ENCODE measurements at regions of chr13 and their contacts with region 1.

Region 1: DNA sequence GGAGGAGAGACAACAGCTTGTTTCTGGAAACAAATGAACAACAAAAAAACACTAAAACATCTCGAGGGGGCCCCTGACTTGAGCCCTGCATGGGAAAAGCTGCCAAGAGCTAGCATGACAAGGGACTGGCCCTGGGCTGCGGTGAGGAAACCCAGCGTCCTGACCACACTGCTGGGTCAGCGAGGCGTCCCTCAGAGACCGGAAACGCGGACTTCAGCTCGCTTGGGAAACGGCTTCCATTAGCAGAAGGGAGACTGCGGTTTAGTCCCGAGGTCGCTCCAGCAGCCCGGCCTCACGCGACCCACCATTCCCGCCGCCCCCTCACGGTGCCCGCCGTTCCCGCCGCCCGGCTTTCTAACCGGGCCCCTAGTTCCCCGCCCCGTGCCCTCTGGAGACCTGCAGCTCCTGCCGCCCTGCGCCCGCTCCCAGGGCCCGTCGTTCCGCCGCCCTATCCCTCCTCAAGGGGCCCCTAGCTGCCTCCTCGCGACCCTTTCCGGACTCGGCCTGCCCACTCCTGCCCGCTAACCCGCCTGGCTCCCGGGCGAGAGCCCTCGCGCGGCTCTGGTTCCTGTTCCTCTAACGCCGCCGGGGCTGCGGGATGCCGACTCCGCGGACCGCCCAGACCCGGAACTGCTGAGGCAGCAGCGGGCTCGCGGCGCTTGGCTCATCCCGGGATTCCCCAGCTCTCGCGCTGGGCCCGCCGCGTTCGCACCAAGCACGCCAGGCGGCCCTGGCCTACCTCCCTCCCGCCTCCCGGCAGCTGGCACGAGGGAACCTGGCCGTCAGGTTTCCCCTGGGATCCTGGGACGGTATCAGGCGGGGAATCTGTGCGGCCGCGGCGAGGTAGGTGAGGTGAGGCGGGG is at the start of gene CCDC122:
- DNase-seq: peak; percentile 79
- H3K4me3 ChIP-seq: peak within 1 kb of the TSS; percentile 71 to 92 (median 76)
- H3K27ac ChIP-seq: peak within 1 kb of the TSS; percentile 90
- H3K4me1 ChIP-seq: peaks cover 11% of the 10 kb centered on the region
- H3K27me3 ChIP-seq: no peaks in the 10 kb centered on the region
- CTCF ChIP-seq: no peak
- POLR2A ChIP-seq: peak; percentile 74
- total RNA-seq, gene CCDC122: 5.1 and 7.5 TPM in 2 replicates

Region 2: DNA sequence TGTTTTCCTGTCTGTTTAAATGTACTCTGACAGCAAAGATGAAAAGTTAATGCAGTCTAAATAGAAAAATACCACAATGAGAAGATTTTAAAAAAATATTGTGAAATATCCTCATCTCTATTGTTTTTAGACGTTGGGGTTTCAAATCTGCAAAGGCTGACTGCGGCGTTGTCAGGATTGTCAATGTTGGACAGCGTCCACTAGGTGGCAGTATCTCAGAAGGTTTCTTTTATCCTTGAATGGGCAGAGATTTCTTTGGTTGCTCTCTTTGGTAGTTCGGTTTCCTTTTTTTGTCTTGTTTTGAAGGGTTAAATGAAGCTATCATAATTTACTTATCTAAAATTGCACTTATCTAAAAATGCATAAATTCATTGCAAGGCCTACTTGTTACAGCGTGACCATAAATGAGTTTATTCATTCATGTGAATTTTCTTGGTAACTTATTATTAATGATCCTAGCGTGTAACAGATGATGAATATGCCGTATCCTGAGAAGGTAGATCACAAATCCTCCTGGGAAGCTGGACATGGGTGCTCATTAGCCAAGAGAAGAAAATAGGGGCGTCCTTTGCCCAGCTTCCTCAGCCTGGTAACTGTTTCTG is 1284.1 kb before region 1 on chr13:
- CTCF ChIA-PET with region 1: interaction called, 5 read pairs
- POLR2A ChIA-PET with region 1: no interaction called
- dilution Hi-C with region 1: no loop called
- intact Hi-C with region 1: loop called (anchors 2 kb)
- DNase-seq: peak; percentile 62
- H3K4me3 ChIP-seq: no peak overlapping the region
- H3K27ac ChIP-seq: no peak overlapping the region
- H3K4me1 ChIP-seq: no peaks in the 10 kb centered on the region
- H3K27me3 ChIP-seq: peaks cover 3 to 10% of the 10 kb centered on the region in 2 experiments
- CTCF ChIP-seq: peak; percentile 72 to 75
- POLR2A ChIP-seq: no peak

Region 3: GRCh38 chr13:43085545-43085944 is 793.6 kb before region 1 on chr13:
- CTCF ChIA-PET with region 1: interaction called, 10 read pairs
- POLR2A ChIA-PET with region 1: no interaction called
- dilution Hi-C with region 1: no loop called
- intact Hi-C with region 1: loop called (anchors 1 kb)
- DNase-seq: peak; percentile 59
- H3K4me3 ChIP-seq: no peak overlapping the region
- H3K27ac ChIP-seq: no peak overlapping the region
- H3K4me1 ChIP-seq: peaks cover 3% of the 10 kb centered on the region
- H3K27me3 ChIP-seq: no peaks in the 10 kb centered on the region
- CTCF ChIP-seq: peak in 1 of 2 donors; percentile 35
- POLR2A ChIP-seq: no peak

Region 4: GRCh38 chr13:43368003-43368402 is 511.1 kb before region 1 on chr13:
- CTCF ChIA-PET with region 1: no interaction called
- POLR2A ChIA-PET with region 1: no interaction called
- dilution Hi-C with region 1: no loop called
- intact Hi-C with region 1: loop called (anchors 10 kb)
- DNase-seq: peak; percentile 37
- H3K4me3 ChIP-seq: no peak overlapping the region
- H3K27ac ChIP-seq: no peak overlapping the region
- H3K4me1 ChIP-seq: peaks cover 21% of the 10 kb centered on the region
- H3K27me3 ChIP-seq: no peaks in the 10 kb centered on the region
- CTCF ChIP-seq: no peak
- POLR2A ChIP-seq: no peak

Region 5: DNA sequence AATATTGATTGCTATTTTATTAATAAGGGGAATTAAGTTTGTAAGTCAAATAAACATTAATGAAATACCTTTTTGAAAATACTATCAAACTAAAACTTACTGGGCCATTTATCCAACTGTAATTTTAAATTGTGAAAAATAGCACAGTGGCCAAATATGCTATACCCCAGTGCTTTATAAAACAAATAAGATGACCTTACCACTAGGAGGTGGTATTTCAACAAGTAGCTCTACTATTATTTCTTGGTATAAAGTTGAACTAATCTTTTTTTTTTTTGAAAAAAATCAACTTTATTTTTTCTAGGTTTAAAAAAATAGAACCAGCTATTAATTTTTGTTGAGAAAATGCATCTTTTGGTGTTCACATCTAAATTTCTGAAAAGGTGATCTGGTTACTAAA is 15.3 kb after region 1 on chr13:
- CTCF ChIA-PET with region 1: interaction called, 11 read pairs
- POLR2A ChIA-PET with region 1: no interaction called
- dilution Hi-C with region 1: no loop called
- intact Hi-C with region 1: no loop called
- DNase-seq: no peak
- H3K4me3 ChIP-seq: no peak overlapping the region
- H3K27ac ChIP-seq: no peak overlapping the region
- H3K4me1 ChIP-seq: no peaks in the 10 kb centered on the region
- H3K27me3 ChIP-seq: no peaks in the 10 kb centered on the region
- CTCF ChIP-seq: peak; percentile 6 to 17
- POLR2A ChIP-seq: no peak